ENCODE measurements at regions of chr1 and their contacts with region 1.

Region 1: GRCh38 chr1:167548059-167548932 is 5.3 kb downstream of the CREG1 start:
- DNase-seq: peak in 3 of 4 experiments; percentile 48 to 87 (median 76)
- ATAC-seq: peak; percentile 41
- H3K4me3 ChIP-seq: peak overlapping the region; percentile 14
- H3K27ac ChIP-seq: peak overlapping the region; percentile 94
- H3K4me1 ChIP-seq: peaks cover 30 to 58% of the 10 kb centered on the region in 2 experiments
- H3K27me3 ChIP-seq: no peaks in the 10 kb centered on the region
- CTCF ChIP-seq: no peak
- EP300 ChIP-seq: peak; percentile 95
- POLR2A ChIP-seq: no peak
- RAD21 ChIP-seq: no peak

Region 2: GRCh38 chr1:167220537-167221125 is 327.7 kb before region 1 on chr1 and contains the start of gene POU2F1:
- CTCF ChIA-PET with region 1: no interaction called
- POLR2A ChIA-PET with region 1: interaction called, 9 read pairs
- in situ Hi-C with region 1: no loop called
- intact Hi-C with region 1: loop called (anchors 5 kb)
- DNase-seq: peak; percentile 96 to 99 (median 97)
- ATAC-seq: peak; percentile 82
- H3K4me3 ChIP-seq: peak within 1 kb of the TSS; percentile 69
- H3K27ac ChIP-seq: peak within 1 kb of the TSS; percentile 95
- H3K4me1 ChIP-seq: peaks cover 17 to 26% of the 10 kb centered on the region in 2 experiments; a peak in 4 of 5 replicates
- H3K27me3 ChIP-seq: no peaks in the 10 kb centered on the region
- CTCF ChIP-seq: peak; percentile 62 to 93 (median 93)
- EP300 ChIP-seq: no peak
- POLR2A ChIP-seq: no peak; the same call in none of the 2 replicates
- RAD21 ChIP-seq: peak; percentile 48 to 59
- polyA plus RNA-seq, gene POU2F1: 2.6 to 6.0 TPM

Measured in K562 (cell line).